ENCODE measurements at regions of chr20 and their contacts with region 1.

Region 1: GRCh38 chr20:22586645-22587310 is 2.4 kb upstream of the FOXA2 start:
- DNase-seq: no peak
- ATAC-seq: peak in 1 of 2 donors; percentile 36
- H3K4me3 ChIP-seq: peak overlapping the region in 2 of 4 donors; percentile 7 to 20
- H3K27ac ChIP-seq: no peak overlapping the region
- H3K4me1 ChIP-seq: peaks cover 0 to 11% of the 10 kb centered on the region in 2 donors
- H3K27me3 ChIP-seq: peaks cover 71 to 87% (median 86%) of the 10 kb centered on the region in 3 donors
- CTCF ChIP-seq: peak in 4 of 5 experiments; percentile 57 to 65 (median 60)
- POLR2A ChIP-seq: no peak

Region 2: GRCh38 chr20:22333885-22334545 is 252.8 kb before region 1 on chr20:
- in situ Hi-C with region 1: loop called (anchors 10 to 25 kb)
- intact Hi-C with region 1: loop called (anchors 1 kb)
- DNase-seq: peak; percentile 25 to 27
- ATAC-seq: peak; percentile 82 to 83
- H3K4me3 ChIP-seq: no peak overlapping the region
- H3K27ac ChIP-seq: no peak overlapping the region
- H3K4me1 ChIP-seq: no peaks in the 10 kb centered on the region
- H3K27me3 ChIP-seq: peaks cover 0 to 8% (median 0%) of the 10 kb centered on the region in 3 donors
- CTCF ChIP-seq: peak; percentile 48 to 76 (median 58)
- POLR2A ChIP-seq: no peak

Region 3: GRCh38 chr20:22339091-22339881 is 247.5 kb before region 1 on chr20:
- in situ Hi-C with region 1: loop called (anchors 10 to 25 kb)
- intact Hi-C with region 1: loop called (anchors 1 kb)
- DNase-seq: no peak
- ATAC-seq: peak; percentile 55 to 61
- H3K4me3 ChIP-seq: no peak overlapping the region
- H3K27ac ChIP-seq: no peak overlapping the region
- H3K4me1 ChIP-seq: no peaks in the 10 kb centered on the region
- H3K27me3 ChIP-seq: no peaks in the 10 kb centered on the region
- CTCF ChIP-seq: peak; percentile 65 to 77 (median 73)
- POLR2A ChIP-seq: no peak

Region 4: GRCh38 chr20:22575087-22575721 is 11.6 kb before region 1 on chr20:
- in situ Hi-C with region 1: no loop called
- intact Hi-C with region 1: no loop called
- DNase-seq: no peak
- ATAC-seq: no peak
- H3K4me3 ChIP-seq: no peak overlapping the region
- H3K27ac ChIP-seq: no peak overlapping the region
- H3K4me1 ChIP-seq: peaks cover 5 to 13% of the 10 kb centered on the region in 2 donors
- H3K27me3 ChIP-seq: peaks cover 86 to 95% (median 90%) of the 10 kb centered on the region in 3 donors
- CTCF ChIP-seq: no peak
- POLR2A ChIP-seq: no peak

Measured in gastrocnemius medialis (tissue), 4 donors.